Right cardiac atrium (tissue), 5 donors: ENCODE measurements at regions of chr1 and their contacts with region 1.

Region 1: GRCh38 chr1:231603598-231604275 is 22.9 kb upstream of the DISC1 start:
- DNase-seq: peak in 2 of 3 donors; percentile 17 to 42
- ATAC-seq: peak; percentile 40 to 72
- H3K4me3 ChIP-seq: peak overlapping the region; percentile 83
- H3K27ac ChIP-seq: no peak overlapping the region
- H3K4me1 ChIP-seq: peaks cover 2% of the 10 kb centered on the region
- H3K27me3 ChIP-seq: no peaks in the 10 kb centered on the region

Region 2: GRCh38 chr1:231364192-231364591 is 239.5 kb before region 1 on chr1:
- intact Hi-C with region 1: loop called in 2 of 4 experiments (anchors 5 kb)
- DNase-seq: peak in 1 of 3 donors; percentile 21
- ATAC-seq: no peak
- H3K4me3 ChIP-seq: no peak overlapping the region
- H3K27ac ChIP-seq: no peak overlapping the region
- H3K4me1 ChIP-seq: no peaks in the 10 kb centered on the region
- H3K27me3 ChIP-seq: no peaks in the 10 kb centered on the region